A673 (cell line): ENCODE measurements at regions of chr11 and their contacts with region 1.

Region 1: DNA sequence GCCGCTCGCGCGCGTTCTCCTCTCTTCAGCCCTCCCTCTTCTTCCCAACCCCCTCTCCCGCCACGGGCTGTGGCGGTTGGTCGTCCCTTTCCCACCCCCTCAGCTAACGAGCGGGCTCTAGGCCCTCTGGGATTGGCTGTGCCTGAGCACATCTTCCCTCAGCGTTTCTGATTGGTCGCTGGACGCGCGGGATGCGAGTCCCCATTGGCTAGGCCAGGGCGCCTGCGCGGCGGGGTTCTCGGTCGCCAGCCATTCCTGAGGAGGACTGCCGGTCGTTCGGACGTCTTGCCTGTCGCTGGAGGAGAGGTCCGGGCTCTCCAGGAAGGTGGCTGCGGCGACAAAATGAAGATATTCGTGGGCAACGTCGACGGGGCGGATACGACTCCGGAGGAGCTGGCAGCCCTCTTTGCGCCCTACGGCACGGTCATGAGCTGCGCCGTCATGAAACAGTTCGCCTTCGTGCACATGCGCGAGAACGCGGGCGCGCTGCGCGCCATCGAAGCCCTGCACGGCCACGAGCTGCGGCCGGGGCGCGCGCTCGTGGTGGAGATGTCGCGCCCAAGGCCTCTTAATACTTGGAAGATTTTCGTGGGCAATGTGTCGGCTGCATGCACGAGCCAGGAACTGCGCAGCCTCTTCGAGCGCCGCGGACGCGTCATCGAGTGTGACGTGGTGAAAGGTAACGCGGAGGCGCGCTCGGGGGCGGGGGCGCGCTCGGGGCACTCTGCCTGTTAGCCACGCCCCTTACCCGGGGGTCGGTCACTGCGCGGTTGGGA is at the start of gene RBM14:
- DNase-seq: peak; percentile 100
- H3K4me3 ChIP-seq: peak within 1 kb of the TSS; percentile 80
- H3K27ac ChIP-seq: peak within 1 kb of the TSS; percentile 94
- H3K4me1 ChIP-seq: peaks cover 22% of the 10 kb centered on the region
- H3K27me3 ChIP-seq: no peaks in the 10 kb centered on the region
- CTCF ChIP-seq: no peak
- total RNA-seq, gene RBM14: 152 and 162 TPM in 2 replicates

Region 2: DNA sequence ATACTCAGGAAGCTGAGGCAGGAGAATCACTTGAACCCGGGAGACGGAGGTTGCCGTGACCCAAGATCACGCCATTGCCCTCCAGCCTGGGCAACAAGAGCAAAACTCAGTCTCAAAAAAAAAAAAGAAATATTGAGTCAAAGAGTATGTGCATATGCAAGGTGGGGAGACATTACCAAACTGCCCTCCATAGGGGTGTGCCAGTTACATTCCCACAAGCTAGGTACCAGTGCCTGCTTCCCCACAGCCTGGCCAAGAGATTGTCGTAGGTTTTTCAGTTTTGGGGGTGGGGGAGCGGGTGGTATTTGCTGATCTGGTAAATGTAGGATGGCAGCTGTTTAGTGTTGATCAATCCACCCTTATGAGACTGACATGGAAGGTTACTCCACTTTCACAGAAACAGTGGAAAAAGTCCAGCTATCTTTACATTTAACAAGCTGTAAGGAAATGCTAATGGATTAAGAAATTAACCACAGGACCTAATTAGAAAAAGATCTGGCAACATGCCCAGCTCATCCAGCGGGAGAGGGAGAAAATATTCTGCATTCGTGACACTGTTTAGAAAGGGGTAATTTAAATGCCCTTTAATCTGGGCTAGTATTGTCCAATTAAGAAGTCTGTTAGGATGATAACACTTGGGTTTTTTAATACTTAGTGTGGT is 457.1 kb before region 1 on chr11:
- CTCF ChIA-PET with region 1: no interaction called
- POLR2A ChIA-PET with region 1: interaction called, 10 read pairs
- intact Hi-C with region 1: no loop called
- DNase-seq: peak; percentile 82
- H3K4me3 ChIP-seq: no peak overlapping the region
- H3K27ac ChIP-seq: no peak overlapping the region
- H3K4me1 ChIP-seq: peaks cover 34% of the 10 kb centered on the region
- H3K27me3 ChIP-seq: no peaks in the 10 kb centered on the region
- CTCF ChIP-seq: no peak

Region 3: DNA sequence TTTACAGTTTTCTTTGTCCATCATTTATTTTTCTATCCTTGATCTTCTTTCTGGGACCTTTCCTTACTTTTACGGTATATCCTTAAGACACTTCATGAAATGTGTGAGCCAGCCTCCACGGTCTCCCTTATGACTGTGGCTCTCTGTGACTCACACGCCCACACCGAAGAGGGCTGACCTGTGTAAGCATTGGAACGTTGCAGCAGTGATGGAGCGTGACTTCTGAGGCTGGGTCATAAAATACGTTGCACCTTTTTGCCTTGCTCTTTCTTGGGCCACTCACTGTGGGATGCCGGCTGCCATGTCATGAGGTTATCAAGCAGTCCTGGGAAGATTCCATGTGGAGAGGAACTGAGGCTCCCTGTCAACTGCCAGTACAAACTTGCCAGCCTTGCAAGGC is 444.4 kb before region 1 on chr11:
- CTCF ChIA-PET with region 1: no interaction called
- POLR2A ChIA-PET with region 1: no interaction called
- intact Hi-C with region 1: no loop called
- DNase-seq: no peak
- H3K4me3 ChIP-seq: no peak overlapping the region
- H3K27ac ChIP-seq: no peak overlapping the region
- H3K4me1 ChIP-seq: no peaks in the 10 kb centered on the region
- H3K27me3 ChIP-seq: no peaks in the 10 kb centered on the region
- CTCF ChIP-seq: no peak

Region 4: GRCh38 chr11:66579017-66579606 is 37.5 kb before region 1 on chr11:
- CTCF ChIA-PET with region 1: no interaction called
- POLR2A ChIA-PET with region 1: no interaction called
- intact Hi-C with region 1: no loop called
- DNase-seq: peak; percentile 84
- H3K4me3 ChIP-seq: no peak overlapping the region
- H3K27ac ChIP-seq: no peak overlapping the region
- H3K4me1 ChIP-seq: no peaks in the 10 kb centered on the region
- H3K27me3 ChIP-seq: no peaks in the 10 kb centered on the region
- CTCF ChIP-seq: peak; percentile 93

Region 5: DNA sequence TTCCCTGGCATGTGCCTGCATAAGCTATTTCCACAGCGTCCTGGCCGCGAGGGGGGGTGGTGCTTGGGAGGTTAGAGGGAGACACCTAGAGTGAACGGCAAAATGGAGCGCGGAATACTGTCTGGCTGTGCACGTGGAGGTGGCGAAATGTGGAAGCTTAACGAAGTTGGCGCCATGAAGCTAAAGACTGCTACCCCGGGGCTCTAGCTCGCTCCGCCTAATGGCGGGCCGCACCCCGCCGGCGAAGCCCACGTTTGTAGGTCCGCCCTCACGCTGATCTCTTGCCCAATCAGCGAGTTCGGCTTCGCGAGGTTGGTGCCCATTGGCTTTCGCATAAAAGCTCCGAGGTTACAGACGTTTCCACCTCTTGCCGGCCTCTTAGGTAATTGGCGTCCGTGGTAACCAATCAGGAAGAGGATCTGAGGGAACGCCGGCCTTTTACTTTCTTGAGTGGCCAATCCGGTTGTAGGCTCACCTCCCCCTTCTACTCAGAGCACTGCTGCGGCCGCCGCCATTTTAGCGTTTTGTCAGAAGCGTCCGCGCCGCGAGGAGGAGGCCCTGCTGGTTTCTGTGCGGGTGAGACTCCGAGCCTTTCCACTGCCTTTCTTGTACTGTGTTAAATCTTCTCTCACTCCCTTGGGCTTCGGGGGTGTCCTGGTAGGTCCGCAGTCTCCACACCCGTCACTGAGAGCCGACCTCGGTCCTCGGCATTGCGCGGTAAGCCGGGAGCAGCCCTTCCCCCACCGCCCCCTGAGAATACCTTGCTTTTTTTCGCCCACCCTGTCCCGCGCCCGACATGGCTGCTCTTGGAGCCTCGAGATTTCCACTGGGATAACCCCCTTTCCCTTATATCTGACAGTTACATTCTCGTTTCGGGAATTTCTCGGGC is 21.9 kb after region 1 on chr11 and contains the start of gene RBM4:
- CTCF ChIA-PET with region 1: no interaction called
- POLR2A ChIA-PET with region 1: interaction called, 4 read pairs
- intact Hi-C with region 1: loop called (anchors 2 kb)
- DNase-seq: peak; percentile 100
- H3K4me3 ChIP-seq: peak within 1 kb of the TSS; percentile 67
- H3K27ac ChIP-seq: peak within 1 kb of the TSS; percentile 95
- H3K4me1 ChIP-seq: peaks cover 44% of the 10 kb centered on the region
- H3K27me3 ChIP-seq: no peaks in the 10 kb centered on the region
- CTCF ChIP-seq: no peak
- total RNA-seq, gene RBM4: 238 and 245 TPM in 2 replicates